Naive thymus-derived CD4-positive, alpha-beta T cell (primary cell): ENCODE measurements at regions of chr4 and their contacts with region 1.

Region 1: DNA sequence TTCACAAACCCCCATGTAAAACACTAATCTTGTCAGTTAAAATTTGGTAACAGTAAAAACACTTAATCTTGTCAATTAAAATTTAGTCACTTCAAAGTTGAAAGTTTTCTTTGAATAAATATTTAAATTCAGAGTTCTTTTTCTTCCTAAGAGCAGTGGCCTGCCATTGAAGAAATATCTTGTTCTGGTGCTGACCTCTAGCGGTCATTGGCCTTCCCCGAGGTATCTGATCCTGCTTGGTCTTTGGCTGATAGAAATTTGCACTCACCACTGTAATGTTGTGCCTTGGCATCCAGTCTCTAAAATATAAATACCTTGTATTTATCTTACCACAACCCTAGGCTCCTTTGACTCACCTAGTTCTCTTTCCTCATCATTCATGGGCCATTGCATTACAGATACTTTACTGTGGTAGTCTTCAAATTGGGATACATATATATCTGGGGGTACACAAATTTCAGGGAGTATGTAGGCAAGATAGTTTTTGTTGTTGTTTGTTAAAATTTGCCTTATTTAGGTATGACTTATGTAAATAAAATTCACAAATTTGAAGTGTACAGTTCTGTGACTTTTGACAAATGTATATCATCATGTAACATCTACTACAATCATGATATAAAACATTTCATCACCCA is 6.7 kb upstream of the ART3 start:
- DNase-seq: peak; percentile 30 to 72 (median 61)
- ATAC-seq: peak; percentile 93
- H3K4me3 ChIP-seq: no peak overlapping the region
- H3K4me3 Mint-ChIP-seq: no peak overlapping the region
- H3K27ac ChIP-seq: no peak overlapping the region
- H3K27ac Mint-ChIP-seq: no peak overlapping the region
- H3K4me1 ChIP-seq: no peaks in the 10 kb centered on the region
- H3K4me1 Mint-ChIP-seq: no peaks in the 10 kb centered on the region
- H3K27me3 ChIP-seq: no peaks in the 10 kb centered on the region
- H3K27me3 Mint-ChIP-seq: peaks cover 0 to 7% (median 0%) of the 10 kb centered on the region in 5 donors

Region 2: GRCh38 chr4:75895744-75896314 is 171.9 kb before region 1 on chr4:
- CTCF ChIA-PET with region 1: interaction called, 10 read pairs
- POLR2A ChIA-PET with region 1: no interaction called
- intact Hi-C with region 1: loop called (anchors 1 to 5 kb)
- DNase-seq: peak in 5 of 9 donors; percentile 17 to 48 (median 31)
- ATAC-seq: peak; percentile 76
- H3K4me3 ChIP-seq: no peak overlapping the region
- H3K4me3 Mint-ChIP-seq: no peak overlapping the region
- H3K27ac ChIP-seq: no peak overlapping the region
- H3K27ac Mint-ChIP-seq: no peak overlapping the region
- H3K4me1 ChIP-seq: no peaks in the 10 kb centered on the region
- H3K4me1 Mint-ChIP-seq: peaks cover 0 to 5% (median 0%) of the 10 kb centered on the region in 7 donors
- H3K27me3 ChIP-seq: no peaks in the 10 kb centered on the region
- H3K27me3 Mint-ChIP-seq: peaks cover 0 to 6% (median 0%) of the 10 kb centered on the region in 5 donors

Region 3: DNA sequence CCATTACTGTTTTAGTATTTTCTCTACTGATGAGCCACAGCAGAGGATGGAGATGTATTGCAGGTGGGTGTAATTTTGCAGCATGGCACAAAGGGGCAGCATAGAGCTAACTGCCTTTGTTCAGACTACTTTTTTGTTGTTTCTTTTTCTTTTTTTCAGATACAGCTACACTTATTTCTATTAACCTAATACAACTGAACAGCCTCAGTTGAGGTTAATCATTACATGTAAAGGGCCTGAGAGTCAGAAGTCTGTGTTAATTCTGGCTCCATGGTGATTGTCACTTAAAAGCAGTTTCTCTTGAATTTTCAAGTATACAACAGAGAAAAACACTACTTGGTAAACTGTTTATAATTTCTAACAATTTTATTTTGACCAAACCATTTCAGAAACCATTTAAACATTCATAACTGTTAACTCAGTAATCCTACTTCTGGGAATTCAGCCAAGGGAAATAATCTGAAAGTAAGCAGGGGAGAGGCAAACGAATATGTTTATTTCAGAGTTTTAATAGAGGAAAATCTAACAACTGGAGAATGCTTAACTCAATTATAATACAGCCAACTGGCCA is 151.6 kb before region 1 on chr4:
- CTCF ChIA-PET with region 1: interaction called, 4 read pairs
- POLR2A ChIA-PET with region 1: no interaction called
- intact Hi-C with region 1: loop called (anchors 1 kb)
- DNase-seq: peak in 7 of 9 donors; percentile 17 to 65 (median 26)
- ATAC-seq: peak; percentile 88
- H3K4me3 ChIP-seq: no peak overlapping the region
- H3K4me3 Mint-ChIP-seq: no peak overlapping the region
- H3K27ac ChIP-seq: no peak overlapping the region
- H3K27ac Mint-ChIP-seq: peak overlapping the region in 3 of 9 donors; percentile 24 to 45 (median 42)
- H3K4me1 ChIP-seq: no peaks in the 10 kb centered on the region
- H3K4me1 Mint-ChIP-seq: peaks cover 0 to 4% (median 0%) of the 10 kb centered on the region in 7 donors
- H3K27me3 ChIP-seq: no peaks in the 10 kb centered on the region
- H3K27me3 Mint-ChIP-seq: no peaks in the 10 kb centered on the region

Region 4: DNA sequence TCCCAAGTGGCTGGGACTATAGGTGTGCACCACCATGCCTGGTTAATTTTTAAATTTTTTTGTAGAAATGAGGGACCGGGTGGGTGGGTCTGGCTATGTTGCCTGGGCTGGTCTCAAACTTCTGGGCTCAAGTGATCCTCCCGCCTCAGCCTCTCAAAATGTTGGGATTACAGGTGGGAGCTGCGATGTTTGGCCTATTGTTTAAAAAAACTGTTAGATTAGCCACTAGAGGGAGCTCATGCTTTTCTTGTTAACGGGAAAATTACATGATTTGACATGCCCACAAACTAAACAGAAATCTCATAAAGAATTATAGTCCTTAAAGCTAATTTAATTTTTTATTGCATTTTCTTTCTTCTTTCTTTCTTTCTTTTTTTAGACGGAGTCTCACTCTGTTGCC is 72.0 kb before region 1 on chr4:
- CTCF ChIA-PET with region 1: interaction called, 6 read pairs
- POLR2A ChIA-PET with region 1: no interaction called
- intact Hi-C with region 1: loop called (anchors 1 kb)
- DNase-seq: peak in 7 of 9 donors; percentile 13 to 62 (median 43)
- ATAC-seq: peak; percentile 39
- H3K4me3 ChIP-seq: no peak overlapping the region
- H3K4me3 Mint-ChIP-seq: no peak overlapping the region
- H3K27ac ChIP-seq: no peak overlapping the region
- H3K27ac Mint-ChIP-seq: no peak overlapping the region
- H3K4me1 ChIP-seq: no peaks in the 10 kb centered on the region
- H3K4me1 Mint-ChIP-seq: peaks cover 0 to 10% (median 5%) of the 10 kb centered on the region in 7 donors
- H3K27me3 ChIP-seq: no peaks in the 10 kb centered on the region
- H3K27me3 Mint-ChIP-seq: peaks cover 0 to 10% (median 2%) of the 10 kb centered on the region in 5 donors

Region 5: DNA sequence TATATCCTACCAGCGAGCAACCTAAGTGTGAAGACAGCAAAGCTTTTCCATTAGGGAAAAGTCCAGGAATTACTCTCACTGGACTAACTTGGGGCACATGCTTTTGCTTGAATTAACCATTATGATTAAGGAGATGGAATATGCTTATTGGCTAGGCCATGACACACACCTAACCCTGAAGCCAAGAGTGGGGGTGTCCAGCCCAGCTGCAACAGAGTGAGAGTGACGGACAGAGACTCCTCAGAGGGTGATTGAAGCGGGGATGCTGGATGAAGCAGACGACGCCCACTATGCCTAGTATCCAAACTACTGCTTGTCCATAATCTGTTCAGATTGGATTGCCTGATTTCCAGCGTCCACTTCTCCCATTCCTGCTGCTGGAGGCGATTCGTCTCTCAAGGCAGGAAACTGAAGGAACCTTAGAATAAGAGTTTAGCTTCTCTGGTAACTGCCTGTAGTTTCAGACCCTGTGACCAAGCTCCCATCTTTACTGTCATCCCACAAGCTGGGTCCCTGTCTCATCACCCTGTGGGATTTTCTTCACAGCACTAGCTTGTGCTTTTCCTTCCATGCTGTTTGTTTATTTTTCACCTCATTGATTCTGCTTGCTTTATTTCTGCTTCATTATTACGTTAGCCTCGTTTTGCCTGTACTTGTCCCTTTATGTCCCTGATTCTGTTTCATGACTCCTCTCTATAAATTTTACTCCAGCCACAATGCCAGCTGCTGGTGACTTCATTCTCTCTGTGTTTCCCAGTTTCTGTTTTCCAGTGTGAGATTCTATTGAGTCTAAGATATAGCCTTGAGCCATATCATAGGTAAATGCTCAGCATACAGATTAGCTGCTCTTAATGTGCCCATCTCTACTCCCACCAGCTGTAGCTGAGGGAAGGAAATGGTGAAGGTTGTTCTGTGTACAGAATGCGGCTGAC is 202.7 kb after region 1 on chr4:
- CTCF ChIA-PET with region 1: no interaction called
- POLR2A ChIA-PET with region 1: no interaction called
- intact Hi-C with region 1: no loop called
- DNase-seq: no peak
- ATAC-seq: no peak
- H3K4me3 ChIP-seq: no peak overlapping the region
- H3K4me3 Mint-ChIP-seq: no peak overlapping the region
- H3K27ac ChIP-seq: no peak overlapping the region
- H3K27ac Mint-ChIP-seq: no peak overlapping the region
- H3K4me1 ChIP-seq: no peaks in the 10 kb centered on the region
- H3K4me1 Mint-ChIP-seq: no peaks in the 10 kb centered on the region
- H3K27me3 ChIP-seq: no peaks in the 10 kb centered on the region
- H3K27me3 Mint-ChIP-seq: peaks cover 9 to 32% (median 10%) of the 10 kb centered on the region in 5 donors

Region 6: DNA sequence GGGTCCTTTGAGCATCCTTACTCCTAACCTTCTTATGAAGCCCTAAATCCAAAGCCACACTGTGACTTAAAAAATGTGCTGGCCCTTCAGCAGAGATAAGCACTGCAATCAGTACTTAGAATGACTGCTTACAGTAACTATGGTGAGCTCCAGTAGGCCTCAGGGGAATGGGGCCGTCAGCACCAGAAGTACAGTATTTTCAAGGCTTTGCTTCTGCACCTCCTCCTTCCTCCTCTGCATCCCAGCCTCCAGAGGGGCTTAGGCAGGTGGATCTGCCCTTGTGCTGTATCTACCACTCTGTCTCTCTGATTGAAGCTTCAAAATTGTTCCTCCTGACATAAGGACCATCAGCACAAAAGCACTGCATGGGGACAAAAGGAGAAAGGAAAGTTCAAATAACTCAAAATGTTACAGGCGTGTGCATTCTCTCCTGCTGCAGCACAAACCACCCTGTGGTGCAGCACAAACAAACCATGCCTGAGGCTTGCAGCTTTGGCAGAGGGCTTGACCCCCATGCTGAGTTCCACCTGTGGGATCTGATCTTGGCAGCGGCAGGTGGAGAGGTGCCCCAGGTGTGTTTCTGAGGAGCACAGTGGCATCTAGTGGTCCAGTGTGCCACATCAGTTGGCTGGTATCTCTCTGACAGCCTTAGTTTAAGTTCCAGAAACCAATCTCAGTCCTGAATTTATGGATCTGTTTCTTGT is 665.5 kb after region 1 on chr4:
- CTCF ChIA-PET with region 1: no interaction called
- POLR2A ChIA-PET with region 1: no interaction called
- intact Hi-C with region 1: no loop called
- DNase-seq: no peak
- ATAC-seq: no peak
- H3K4me3 ChIP-seq: no peak overlapping the region
- H3K4me3 Mint-ChIP-seq: no peak overlapping the region
- H3K27ac ChIP-seq: no peak overlapping the region
- H3K27ac Mint-ChIP-seq: no peak overlapping the region
- H3K4me1 ChIP-seq: no peaks in the 10 kb centered on the region
- H3K4me1 Mint-ChIP-seq: peaks cover 0 to 3% (median 0%) of the 10 kb centered on the region in 7 donors
- H3K27me3 ChIP-seq: no peaks in the 10 kb centered on the region
- H3K27me3 Mint-ChIP-seq: peaks cover 0 to 12% (median 3%) of the 10 kb centered on the region in 5 donors